CD14-positive monocyte (primary cell): ENCODE measurements at regions of chr20 and their contacts with region 1.

Region 1: DNA sequence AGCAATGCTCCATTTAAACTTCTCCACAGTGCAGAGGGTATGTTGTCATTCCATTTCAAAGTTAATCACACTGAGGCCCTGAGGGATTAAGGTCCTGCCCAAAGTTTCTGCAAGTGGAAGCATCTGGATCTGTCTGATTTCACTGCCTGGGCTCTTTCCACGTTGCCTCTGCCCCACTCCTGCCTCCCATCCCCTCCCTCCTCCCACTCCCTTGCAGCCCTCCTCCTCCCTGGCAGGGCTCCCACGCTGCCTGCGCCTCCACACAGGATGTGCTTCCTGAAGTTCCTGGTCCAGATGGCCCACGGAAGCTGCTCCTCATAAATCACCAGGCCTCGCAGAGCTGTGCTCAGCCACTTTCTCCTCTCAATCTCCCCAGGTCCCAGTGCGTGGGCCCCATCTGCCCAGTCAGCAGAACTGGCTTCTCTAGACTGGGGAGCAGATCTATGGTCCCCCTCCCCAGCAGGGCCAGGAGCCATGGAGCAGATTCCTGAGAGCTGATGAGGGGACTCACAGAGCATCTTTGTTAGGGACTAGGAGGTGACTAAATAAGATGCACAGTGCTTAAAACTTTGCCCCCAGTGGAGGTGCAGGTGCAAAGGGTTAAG is 65.4 kb upstream of the MAFB start:
- DNase-seq: no peak
- H3K4me3 ChIP-seq: no peak overlapping the region
- H3K4me3 Mint-ChIP-seq: no peak overlapping the region
- H3K27ac ChIP-seq: peak overlapping the region; percentile 4 to 22
- H3K27ac Mint-ChIP-seq: peak overlapping the region in 1 of 7 donors; percentile 80
- H3K4me1 ChIP-seq: peaks cover 68 to 79% of the 10 kb centered on the region in 2 donors
- H3K4me1 Mint-ChIP-seq: peaks cover 82% of the 10 kb centered on the region
- H3K27me3 ChIP-seq: no peaks in the 10 kb centered on the region
- H3K27me3 Mint-ChIP-seq: peaks cover 0 to 10% (median 5%) of the 10 kb centered on the region in 3 donors
- CTCF ChIP-seq: no peak

Region 2: DNA sequence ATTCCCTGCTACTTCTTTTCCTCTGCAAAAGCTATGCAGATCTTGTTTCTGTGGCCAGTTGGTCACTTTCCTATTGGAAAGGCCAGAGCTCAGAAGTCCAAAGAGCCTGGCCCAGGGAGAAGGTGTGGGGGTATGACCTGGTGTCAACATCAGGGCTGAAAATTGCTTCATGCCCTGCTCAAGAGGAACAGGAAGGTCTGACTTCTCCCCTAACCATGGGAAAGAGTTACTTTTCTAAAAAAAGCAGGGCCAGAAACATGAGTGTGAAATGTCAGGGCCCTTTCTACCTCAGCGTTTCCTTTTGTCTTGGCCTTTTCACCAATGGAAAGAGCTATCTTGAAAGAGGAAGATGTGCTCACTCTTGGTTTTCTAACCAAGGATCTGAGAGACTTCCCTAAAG is 182.8 kb before region 1 on chr20:
- intact Hi-C with region 1: loop called in 1 of 2 experiments (anchors 10 kb)
- DNase-seq: peak; percentile 79 to 92 (median 88)
- H3K4me3 ChIP-seq: peak overlapping the region in 1 of 3 experiments; percentile 57
- H3K4me3 Mint-ChIP-seq: peak overlapping the region; percentile 41 to 57
- H3K27ac ChIP-seq: peak overlapping the region; percentile 92 to 95
- H3K27ac Mint-ChIP-seq: peak overlapping the region; percentile 88 to 97 (median 95)
- H3K4me1 ChIP-seq: peaks cover 53 to 59% of the 10 kb centered on the region in 2 donors
- H3K4me1 Mint-ChIP-seq: peaks cover 57% of the 10 kb centered on the region
- H3K27me3 ChIP-seq: no peaks in the 10 kb centered on the region
- H3K27me3 Mint-ChIP-seq: peaks cover 3 to 8% (median 3%) of the 10 kb centered on the region in 3 donors
- CTCF ChIP-seq: no peak

Region 3: GRCh38 chr20:40683221-40683893 is 71.1 kb before region 1 on chr20:
- intact Hi-C with region 1: no loop called
- DNase-seq: peak; percentile 51 to 60 (median 54)
- H3K4me3 ChIP-seq: peak overlapping the region; percentile 93 to 99 (median 97)
- H3K4me3 Mint-ChIP-seq: peak overlapping the region; percentile 99 to 100
- H3K27ac ChIP-seq: peak overlapping the region; percentile 7 to 45
- H3K27ac Mint-ChIP-seq: peak overlapping the region; percentile 41 to 88 (median 79)
- H3K4me1 ChIP-seq: peaks cover 60 to 69% of the 10 kb centered on the region in 2 donors
- H3K4me1 Mint-ChIP-seq: peaks cover 64% of the 10 kb centered on the region
- H3K27me3 ChIP-seq: peaks cover 16 to 58% of the 10 kb centered on the region in 2 donors
- H3K27me3 Mint-ChIP-seq: peaks cover 74 to 76% (median 75%) of the 10 kb centered on the region in 3 donors
- CTCF ChIP-seq: no peak